Ascending aorta (tissue), 2 donors: ENCODE measurements at regions of chr2 and their contacts with region 1.

Region 1: GRCh38 chr2:8004250-8004681 is 677.6 kb upstream of the ID2 start:
- DNase-seq: peak in 1 of 2 donors; percentile 77
- H3K4me3 ChIP-seq: peak overlapping the region; percentile 32 to 48
- H3K27ac ChIP-seq: peak overlapping the region; percentile 77 to 88
- H3K4me1 ChIP-seq: peaks cover 3 to 4% of the 10 kb centered on the region in 2 donors
- H3K27me3 ChIP-seq: no peaks in the 10 kb centered on the region
- CTCF ChIP-seq: no peak

Region 2: DNA sequence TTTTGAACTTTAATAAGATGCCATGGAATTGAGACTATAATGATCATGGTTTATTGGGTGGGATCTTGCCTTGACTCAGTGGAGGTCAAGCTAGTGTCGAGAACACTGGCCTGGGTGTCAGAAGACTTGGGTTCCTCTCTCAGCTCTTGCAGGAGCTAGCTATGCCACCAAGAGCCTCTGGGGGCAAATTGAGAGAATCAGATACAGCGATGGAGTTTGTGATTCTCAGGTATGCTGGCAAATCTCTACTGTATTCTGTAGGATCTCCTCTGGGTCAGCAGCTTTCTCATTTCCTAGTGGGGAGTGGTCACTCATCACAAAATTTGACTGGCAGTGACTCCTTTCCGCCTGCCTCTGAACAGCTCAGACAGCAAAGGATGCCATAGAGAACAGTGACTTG is 610.1 kb before region 1 on chr2:
- intact Hi-C with region 1: no loop called
- DNase-seq: no peak
- H3K4me3 ChIP-seq: no peak overlapping the region
- H3K27ac ChIP-seq: no peak overlapping the region
- H3K4me1 ChIP-seq: no peaks in the 10 kb centered on the region
- H3K27me3 ChIP-seq: no peaks in the 10 kb centered on the region
- CTCF ChIP-seq: no peak

Region 3: GRCh38 chr2:7950035-7950612 is 54.1 kb before region 1 on chr2:
- intact Hi-C with region 1: loop called (anchors 1 kb)
- DNase-seq: peak in 1 of 2 donors; percentile 75
- H3K4me3 ChIP-seq: no peak overlapping the region
- H3K27ac ChIP-seq: peak overlapping the region; percentile 73 to 77
- H3K4me1 ChIP-seq: peaks cover 0 to 15% of the 10 kb centered on the region in 2 donors
- H3K27me3 ChIP-seq: no peaks in the 10 kb centered on the region
- CTCF ChIP-seq: no peak

Region 4: GRCh38 chr2:8022908-8023640 is 18.8 kb after region 1 on chr2:
- intact Hi-C with region 1: no loop called
- DNase-seq: no peak
- H3K4me3 ChIP-seq: no peak overlapping the region
- H3K27ac ChIP-seq: no peak overlapping the region
- H3K4me1 ChIP-seq: no peaks in the 10 kb centered on the region
- H3K27me3 ChIP-seq: no peaks in the 10 kb centered on the region
- CTCF ChIP-seq: no peak

Region 5: GRCh38 chr2:8134985-8135682 is 130.9 kb after region 1 on chr2:
- intact Hi-C with region 1: loop called (anchors 5 kb)
- DNase-seq: no peak
- H3K4me3 ChIP-seq: no peak overlapping the region
- H3K27ac ChIP-seq: no peak overlapping the region
- H3K4me1 ChIP-seq: peaks cover 3 to 14% of the 10 kb centered on the region in 2 donors
- H3K27me3 ChIP-seq: no peaks in the 10 kb centered on the region
- CTCF ChIP-seq: no peak